Ascending aorta (tissue), 2 donors: ENCODE measurements at regions of chr16 and their contacts with region 1.

Region 1: GRCh38 chr16:75342308-75342829 is 90.9 kb downstream of the CFDP1 start:
- DNase-seq: no peak
- H3K4me3 ChIP-seq: no peak overlapping the region
- H3K27ac ChIP-seq: peak overlapping the region; percentile 49 to 66
- H3K4me1 ChIP-seq: peaks cover 9 to 26% of the 10 kb centered on the region in 2 donors
- H3K27me3 ChIP-seq: no peaks in the 10 kb centered on the region
- CTCF ChIP-seq: no peak

Region 2: GRCh38 chr16:75172578-75172977 is 169.8 kb before region 1 on chr16:
- intact Hi-C with region 1: no loop called
- DNase-seq: no peak
- H3K4me3 ChIP-seq: no peak overlapping the region
- H3K27ac ChIP-seq: no peak overlapping the region
- H3K4me1 ChIP-seq: no peaks in the 10 kb centered on the region
- H3K27me3 ChIP-seq: no peaks in the 10 kb centered on the region
- CTCF ChIP-seq: no peak

Region 3: GRCh38 chr16:75379911-75380847 is 37.8 kb after region 1 on chr16:
- intact Hi-C with region 1: loop called (anchors 5 kb)
- DNase-seq: no peak
- H3K4me3 ChIP-seq: no peak overlapping the region
- H3K27ac ChIP-seq: peak overlapping the region in 1 of 2 donors; percentile 23
- H3K4me1 ChIP-seq: peaks cover 0 to 6% of the 10 kb centered on the region in 2 donors
- H3K27me3 ChIP-seq: no peaks in the 10 kb centered on the region
- CTCF ChIP-seq: no peak